CD4-positive, alpha-beta T cell (primary cell): ENCODE measurements at regions of chr14 and their contacts with region 1.

Region 1: GRCh38 chr14:51651388-51652167 is at the start of gene FRMD6:
- DNase-seq: peak; percentile 61 to 91 (median 76)
- ATAC-seq: peak; percentile 80
- H3K4me3 ChIP-seq: peak within 1 kb of the TSS; percentile 72
- H3K4me3 Mint-ChIP-seq: peak within 1 kb of the TSS; percentile 86
- H3K27ac ChIP-seq: peak within 1 kb of the TSS in 1 of 2 donors; percentile 61
- H3K27ac Mint-ChIP-seq: peak within 1 kb of the TSS; percentile 84
- H3K4me1 ChIP-seq: peaks cover 15% of the 10 kb centered on the region
- H3K4me1 Mint-ChIP-seq: peaks cover 20% of the 10 kb centered on the region
- H3K27me3 ChIP-seq: peaks cover 5 to 18% of the 10 kb centered on the region in 2 experiments
- H3K27me3 Mint-ChIP-seq: peaks cover 17% of the 10 kb centered on the region
- CTCF ChIP-seq: peak; percentile 75
- total RNA-seq, gene FRMD6: 1.4 to 1.5 TPM

Region 2: DNA sequence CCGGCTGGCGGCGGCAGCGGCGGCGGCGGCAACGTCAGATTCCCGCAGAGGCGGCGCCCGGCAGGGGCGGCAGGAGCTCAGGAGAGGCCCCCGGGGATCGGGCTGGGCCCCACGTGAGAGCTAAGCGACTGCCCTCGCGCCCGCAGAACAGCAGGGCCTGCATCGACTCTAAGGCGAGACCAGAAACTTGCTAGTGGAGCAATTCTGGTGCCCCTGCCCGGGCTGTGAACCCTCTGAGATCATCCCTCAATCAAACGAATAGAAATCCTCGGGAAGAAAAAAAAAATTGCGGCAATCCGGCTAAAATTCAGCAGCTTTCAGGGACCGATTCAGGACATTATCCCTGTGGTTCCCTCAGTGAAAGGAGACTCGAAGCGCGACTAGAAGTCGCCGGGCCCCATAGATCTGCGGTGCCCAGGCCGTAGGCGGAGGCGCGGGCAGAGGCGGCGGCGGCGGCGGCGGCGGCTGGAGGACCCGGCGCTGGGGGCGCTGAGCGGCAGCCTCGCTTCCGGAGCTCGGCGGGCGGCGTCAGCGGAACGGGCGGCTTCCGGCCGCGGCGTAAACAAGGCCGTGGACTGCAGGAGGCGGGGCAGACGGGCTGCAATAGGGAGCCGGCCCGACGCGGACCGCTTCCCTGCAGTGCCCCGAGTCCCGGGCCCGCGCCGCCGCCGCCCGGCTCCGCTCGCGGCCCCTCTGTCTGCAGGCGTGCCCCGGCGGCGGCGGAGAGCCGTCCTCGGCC is 1883.8 kb before region 1 on chr14 and contains the start of gene KLHDC2:
- CTCF ChIA-PET with region 1: no interaction called
- POLR2A ChIA-PET with region 1: no interaction called
- intact Hi-C with region 1: loop called in 1 of 2 experiments (anchors 10 kb)
- DNase-seq: peak; percentile 78 to 95 (median 87)
- ATAC-seq: peak; percentile 65
- H3K4me3 ChIP-seq: peak within 1 kb of the TSS; percentile 96
- H3K4me3 Mint-ChIP-seq: peak within 1 kb of the TSS; percentile 100
- H3K27ac ChIP-seq: peak within 1 kb of the TSS; percentile 93 to 95
- H3K27ac Mint-ChIP-seq: peak within 1 kb of the TSS; percentile 99
- H3K4me1 ChIP-seq: peaks cover 35% of the 10 kb centered on the region
- H3K4me1 Mint-ChIP-seq: peaks cover 45% of the 10 kb centered on the region
- H3K27me3 ChIP-seq: no peaks in the 10 kb centered on the region
- H3K27me3 Mint-ChIP-seq: no peaks in the 10 kb centered on the region
- CTCF ChIP-seq: no peak
- total RNA-seq, gene KLHDC2: 142 to 143 TPM

Region 3: DNA sequence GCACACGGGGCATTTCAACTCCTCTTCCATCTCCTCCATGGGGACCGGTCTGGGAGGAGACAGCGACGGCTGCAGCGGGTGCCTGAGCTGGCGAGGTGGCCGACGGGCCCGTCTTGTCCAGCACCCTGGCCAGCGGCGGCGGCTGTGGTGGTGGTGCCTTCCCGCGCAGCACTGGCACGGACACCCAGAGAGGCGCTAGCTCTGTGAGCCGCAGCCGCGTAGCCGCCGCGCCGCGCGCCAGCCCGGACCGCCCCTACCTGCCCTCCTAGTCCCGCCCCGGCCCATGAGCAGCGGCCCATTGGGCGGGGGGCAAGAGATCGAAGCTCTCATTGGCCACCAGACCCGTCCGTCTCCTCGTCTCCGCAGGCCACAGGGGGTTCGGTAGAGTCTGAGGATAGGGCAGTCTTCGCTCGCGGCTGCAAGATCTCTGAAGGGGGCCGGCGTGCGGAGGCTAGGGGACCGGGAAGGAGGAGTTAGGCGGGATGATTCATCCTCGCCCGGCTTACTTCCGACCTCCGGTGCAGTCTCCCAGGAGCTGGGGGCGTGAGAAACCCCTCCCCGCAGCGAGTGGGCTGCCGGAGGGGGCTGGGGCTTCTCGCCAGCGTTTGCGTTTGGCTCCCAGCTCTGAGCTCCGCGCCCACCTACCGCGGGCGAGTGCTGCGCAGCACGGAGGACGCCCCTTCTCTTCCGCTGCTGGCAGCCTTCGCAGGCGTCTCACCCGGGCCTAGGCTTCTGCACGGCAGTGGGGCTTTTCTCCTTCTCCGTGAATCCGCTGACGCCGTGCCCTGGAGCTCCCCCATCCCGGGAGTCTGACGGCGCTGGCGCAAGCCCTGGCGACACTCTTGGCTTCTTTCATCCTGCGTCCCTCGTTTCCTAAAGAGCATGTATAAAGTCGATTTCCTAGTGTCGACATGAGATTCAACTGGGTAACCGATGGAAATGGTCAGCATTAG is 556.4 kb before region 1 on chr14 and contains the start of gene TRIM9:
- CTCF ChIA-PET with region 1: no interaction called
- POLR2A ChIA-PET with region 1: no interaction called
- intact Hi-C with region 1: loop called in 1 of 2 experiments (anchors 5 kb)
- DNase-seq: peak; percentile 78 to 96 (median 88)
- ATAC-seq: peak; percentile 97
- H3K4me3 ChIP-seq: peak within 1 kb of the TSS; percentile 73
- H3K4me3 Mint-ChIP-seq: peak within 1 kb of the TSS; percentile 99
- H3K27ac ChIP-seq: no peak within 1 kb of the TSS
- H3K27ac Mint-ChIP-seq: peak within 1 kb of the TSS; percentile 84
- H3K4me1 ChIP-seq: peaks cover 25% of the 10 kb centered on the region
- H3K4me1 Mint-ChIP-seq: peaks cover 13% of the 10 kb centered on the region
- H3K27me3 ChIP-seq: peaks cover 5 to 23% of the 10 kb centered on the region in 2 experiments
- H3K27me3 Mint-ChIP-seq: peaks cover 32% of the 10 kb centered on the region
- CTCF ChIP-seq: no peak
- total RNA-seq, gene TRIM9: 0.19 to 0.45 TPM

Region 4: DNA sequence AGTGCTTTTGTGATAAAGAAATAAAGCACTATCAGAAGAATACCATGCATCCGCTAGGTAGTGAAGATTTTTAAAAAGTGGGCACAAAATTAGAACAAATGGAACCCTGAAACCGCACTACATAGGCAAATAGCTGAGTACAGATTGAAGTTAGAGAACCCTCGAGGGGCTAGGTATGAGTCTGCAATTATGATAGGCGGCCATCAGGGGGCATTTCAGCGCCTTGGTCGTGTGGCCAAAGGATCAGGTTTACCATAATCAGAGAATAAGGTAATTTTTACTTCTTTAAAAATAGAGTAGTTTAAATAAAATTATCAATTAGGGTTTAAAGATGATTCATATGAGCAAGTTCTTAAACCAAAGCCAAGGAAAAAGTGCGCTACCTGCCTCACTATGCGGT is 281.8 kb before region 1 on chr14:
- CTCF ChIA-PET with region 1: no interaction called
- POLR2A ChIA-PET with region 1: no interaction called
- intact Hi-C with region 1: no loop called
- DNase-seq: peak in 4 of 14 experiments; percentile 10 to 29 (median 26)
- ATAC-seq: no peak
- H3K4me3 ChIP-seq: no peak overlapping the region
- H3K4me3 Mint-ChIP-seq: no peak overlapping the region
- H3K27ac ChIP-seq: no peak overlapping the region
- H3K27ac Mint-ChIP-seq: no peak overlapping the region
- H3K4me1 ChIP-seq: no peaks in the 10 kb centered on the region
- H3K4me1 Mint-ChIP-seq: no peaks in the 10 kb centered on the region
- H3K27me3 ChIP-seq: peaks cover 0 to 1% of the 10 kb centered on the region in 2 experiments
- H3K27me3 Mint-ChIP-seq: peaks cover 10% of the 10 kb centered on the region
- CTCF ChIP-seq: peak; percentile 34

Region 5: DNA sequence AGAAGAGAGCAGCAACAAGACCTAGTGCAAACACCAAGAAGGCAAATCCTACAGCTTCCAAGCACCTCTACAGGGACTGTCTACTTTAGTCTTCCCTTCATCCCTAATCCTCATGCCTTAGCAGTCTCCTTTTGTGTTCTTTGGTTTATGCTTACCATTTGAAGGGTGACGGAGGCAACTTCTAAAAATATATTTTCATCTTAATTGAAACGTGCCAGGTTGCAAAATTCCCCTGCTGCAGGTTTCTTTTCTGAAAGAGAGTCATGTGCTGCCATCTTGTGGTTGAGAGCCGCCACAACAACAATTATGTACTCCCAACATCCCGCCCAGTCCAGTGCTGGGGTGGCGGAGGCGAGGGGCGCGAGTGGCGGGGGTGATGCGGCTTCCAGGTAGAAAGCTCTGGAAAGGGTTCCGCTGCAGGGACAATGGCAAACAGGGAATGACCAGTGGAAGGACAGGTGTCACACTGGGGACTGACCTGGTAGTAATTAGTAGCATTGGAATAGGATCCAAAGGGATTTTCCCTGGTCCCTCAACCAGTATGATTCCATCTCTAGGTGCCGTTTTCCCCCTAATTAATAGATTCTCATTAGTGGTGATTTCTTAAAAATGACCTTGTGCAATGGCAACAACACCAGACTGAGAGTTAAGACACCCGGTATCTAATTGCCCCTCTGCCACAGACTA is 128.6 kb after region 1 on chr14:
- CTCF ChIA-PET with region 1: no interaction called
- POLR2A ChIA-PET with region 1: no interaction called
- intact Hi-C with region 1: loop called in 1 of 2 experiments (anchors 10 kb)
- DNase-seq: peak; percentile 51 to 87 (median 65)
- ATAC-seq: peak; percentile 71
- H3K4me3 ChIP-seq: no peak overlapping the region
- H3K4me3 Mint-ChIP-seq: no peak overlapping the region
- H3K27ac ChIP-seq: no peak overlapping the region
- H3K27ac Mint-ChIP-seq: no peak overlapping the region
- H3K4me1 ChIP-seq: peaks cover 13% of the 10 kb centered on the region
- H3K4me1 Mint-ChIP-seq: peaks cover 28% of the 10 kb centered on the region
- H3K27me3 ChIP-seq: peaks cover 0 to 3% of the 10 kb centered on the region in 2 experiments
- H3K27me3 Mint-ChIP-seq: peaks cover 12% of the 10 kb centered on the region
- CTCF ChIP-seq: peak; percentile 87

Region 6: DNA sequence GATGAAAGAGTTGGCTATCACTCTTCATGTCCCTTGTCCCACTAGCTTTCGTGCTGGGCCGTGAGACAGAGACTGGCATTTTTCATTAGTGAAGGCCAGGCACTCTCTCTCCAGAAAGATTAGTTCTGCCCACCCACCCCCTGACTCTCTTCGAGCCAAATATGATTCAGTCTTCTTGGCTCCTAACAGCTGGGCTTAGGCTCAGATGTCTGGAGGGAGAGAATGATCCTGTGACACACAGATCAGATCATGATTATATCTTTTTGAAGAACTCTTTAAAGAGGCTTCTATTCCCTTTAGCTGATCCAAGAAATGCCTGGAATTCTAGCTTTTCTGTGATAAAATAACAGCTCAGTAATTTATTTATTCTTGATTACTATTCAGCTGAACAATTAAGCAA is 203.7 kb after region 1 on chr14:
- CTCF ChIA-PET with region 1: interaction called, 5 read pairs
- POLR2A ChIA-PET with region 1: interaction called, 3 read pairs
- intact Hi-C with region 1: loop called in 1 of 2 experiments (anchors 10 kb)
- DNase-seq: no peak
- ATAC-seq: no peak
- H3K4me3 ChIP-seq: no peak overlapping the region
- H3K4me3 Mint-ChIP-seq: no peak overlapping the region
- H3K27ac ChIP-seq: no peak overlapping the region
- H3K27ac Mint-ChIP-seq: no peak overlapping the region
- H3K4me1 ChIP-seq: peaks cover 21% of the 10 kb centered on the region
- H3K4me1 Mint-ChIP-seq: peaks cover 66% of the 10 kb centered on the region
- H3K27me3 ChIP-seq: no peaks in the 10 kb centered on the region
- H3K27me3 Mint-ChIP-seq: no peaks in the 10 kb centered on the region
- CTCF ChIP-seq: no peak

Region 7: DNA sequence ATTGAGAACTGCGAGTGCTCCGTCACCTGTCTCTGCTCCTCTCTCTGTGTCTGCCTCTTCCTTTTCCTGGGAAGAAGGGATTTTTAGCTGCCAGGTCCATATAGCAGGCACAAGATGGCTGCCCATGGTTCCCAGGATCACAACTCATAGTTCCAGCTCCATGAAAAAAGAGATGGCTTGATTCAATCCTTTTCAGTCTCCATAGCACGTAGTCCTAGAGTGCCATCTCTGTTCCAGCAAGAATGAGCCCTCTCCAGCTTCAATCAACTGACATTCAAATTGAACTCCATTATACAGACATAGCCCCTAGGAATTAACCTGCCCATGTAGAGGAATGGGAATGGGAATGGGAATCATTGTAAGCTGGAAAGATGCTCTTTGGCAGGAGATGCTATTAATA is 303.1 kb after region 1 on chr14:
- CTCF ChIA-PET with region 1: no interaction called
- POLR2A ChIA-PET with region 1: no interaction called
- intact Hi-C with region 1: no loop called
- DNase-seq: peak in 1 of 14 experiments; percentile 15
- ATAC-seq: no peak
- H3K4me3 ChIP-seq: no peak overlapping the region
- H3K4me3 Mint-ChIP-seq: no peak overlapping the region
- H3K27ac ChIP-seq: no peak overlapping the region
- H3K27ac Mint-ChIP-seq: peak overlapping the region; percentile 73
- H3K4me1 ChIP-seq: no peaks in the 10 kb centered on the region
- H3K4me1 Mint-ChIP-seq: peaks cover 32% of the 10 kb centered on the region
- H3K27me3 ChIP-seq: no peaks in the 10 kb centered on the region
- H3K27me3 Mint-ChIP-seq: no peaks in the 10 kb centered on the region
- CTCF ChIP-seq: no peak

Region 8: GRCh38 chr14:51989293-51990234 is 338.0 kb after region 1 on chr14 and contains the start of gene RTRAF:
- CTCF ChIA-PET with region 1: no interaction called
- POLR2A ChIA-PET with region 1: no interaction called
- intact Hi-C with region 1: loop called in 1 of 2 experiments (anchors 5 kb)
- DNase-seq: peak; percentile 83 to 97 (median 89)
- ATAC-seq: peak; percentile 96
- H3K4me3 ChIP-seq: peak within 1 kb of the TSS; percentile 87
- H3K4me3 Mint-ChIP-seq: peak within 1 kb of the TSS; percentile 99
- H3K27ac ChIP-seq: peak within 1 kb of the TSS; percentile 84 to 87
- H3K27ac Mint-ChIP-seq: peak within 1 kb of the TSS; percentile 94
- H3K4me1 ChIP-seq: peaks cover 18% of the 10 kb centered on the region
- H3K4me1 Mint-ChIP-seq: peaks cover 53% of the 10 kb centered on the region
- H3K27me3 ChIP-seq: no peaks in the 10 kb centered on the region
- H3K27me3 Mint-ChIP-seq: no peaks in the 10 kb centered on the region
- CTCF ChIP-seq: no peak
- total RNA-seq, gene RTRAF: 155 to 157 TPM